SK-N-SH (cell line): ENCODE measurements at regions of chr2 and their contacts with region 1.

Region 1: DNA sequence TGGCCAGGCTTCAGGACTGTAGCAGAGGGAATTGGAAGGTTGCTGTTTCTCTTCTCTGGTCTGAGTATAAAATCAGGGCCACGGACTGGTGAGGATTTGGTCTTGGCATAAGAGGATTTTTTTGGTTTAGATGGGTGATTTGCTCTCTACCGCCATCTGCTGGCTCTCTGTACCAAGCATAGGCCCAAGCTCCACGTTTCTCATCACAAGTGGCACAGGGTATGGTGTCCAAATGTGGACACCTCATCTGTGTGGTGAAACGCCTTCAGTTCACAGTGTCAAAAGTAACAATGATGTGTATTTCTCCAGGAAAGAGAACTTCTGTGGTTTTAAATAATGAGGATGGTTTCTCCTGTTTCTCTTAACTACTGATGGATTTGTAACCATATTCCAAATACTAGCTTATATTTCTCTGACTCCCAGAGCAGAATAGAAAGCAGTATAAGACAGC is 115.1 kb downstream of the EML6 start:
- DNase-seq: peak; percentile 66
- H3K4me3 ChIP-seq: peak overlapping the region in 1 of 2 experiments; percentile 27; a peak in 1 of 4 replicates
- H3K27ac ChIP-seq: no peak overlapping the region
- H3K4me1 ChIP-seq: peaks cover 0 to 4% of the 10 kb centered on the region in 2 experiments; a peak in 2 of 4 replicates
- H3K27me3 ChIP-seq: no peaks in the 10 kb centered on the region
- CTCF ChIP-seq: peak; percentile 95
- EP300 ChIP-seq: no peak
- RAD21 ChIP-seq: peak; percentile 81

Region 2: GRCh38 chr2:54634564-54635511 is 203.8 kb before region 1 on chr2:
- CTCF ChIA-PET with region 1: no interaction called
- POLR2A ChIA-PET with region 1: no interaction called
- DNase-seq: no peak
- H3K4me3 ChIP-seq: peak overlapping the region; percentile 17 to 24; a peak in 2 of 4 replicates
- H3K27ac ChIP-seq: peak overlapping the region; percentile 79 to 82
- H3K4me1 ChIP-seq: peaks cover 28 to 45% of the 10 kb centered on the region in 2 experiments
- H3K27me3 ChIP-seq: no peaks in the 10 kb centered on the region
- CTCF ChIP-seq: no peak
- EP300 ChIP-seq: no peak
- RAD21 ChIP-seq: no peak

Region 3: DNA sequence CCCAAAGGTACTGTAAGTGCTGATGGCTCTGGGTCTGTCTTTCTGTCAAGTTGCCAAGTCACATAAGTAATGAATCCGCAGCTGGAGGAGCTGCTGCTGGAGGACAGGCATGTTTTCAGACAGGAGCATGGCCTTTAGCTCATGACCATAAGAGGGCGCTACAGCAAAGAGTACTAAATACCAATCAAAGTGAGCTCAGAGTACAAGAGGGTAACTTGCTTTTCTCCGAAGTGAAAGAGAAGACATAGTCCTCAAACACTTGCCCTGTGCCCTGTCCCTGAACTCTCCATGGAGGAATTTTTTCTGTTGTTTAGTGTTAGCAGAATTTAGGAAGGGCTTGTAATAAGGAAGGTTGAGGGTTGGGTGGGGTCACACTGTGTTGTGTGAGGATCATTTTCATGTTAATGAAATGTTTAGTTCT is 173.2 kb before region 1 on chr2:
- CTCF ChIA-PET with region 1: interaction called, 22 read pairs
- POLR2A ChIA-PET with region 1: no interaction called
- DNase-seq: peak; percentile 48
- H3K4me3 ChIP-seq: no peak overlapping the region; a peak in 1 of 4 replicates
- H3K27ac ChIP-seq: peak overlapping the region; percentile 34 to 73; a peak in 3 of 4 replicates
- H3K4me1 ChIP-seq: peaks cover 2 to 31% of the 10 kb centered on the region in 2 experiments; a peak in 3 of 4 replicates
- H3K27me3 ChIP-seq: no peaks in the 10 kb centered on the region
- CTCF ChIP-seq: peak; percentile 71
- EP300 ChIP-seq: no peak
- RAD21 ChIP-seq: peak; percentile 53

Region 4: GRCh38 chr2:54773838-54774237 is 64.8 kb before region 1 on chr2:
- CTCF ChIA-PET with region 1: interaction called, 21 read pairs
- POLR2A ChIA-PET with region 1: no interaction called
- DNase-seq: no peak
- H3K4me3 ChIP-seq: no peak overlapping the region
- H3K27ac ChIP-seq: peak overlapping the region in 1 of 2 experiments; percentile 67; a peak in 1 of 4 replicates
- H3K4me1 ChIP-seq: peaks cover 0 to 30% of the 10 kb centered on the region in 2 experiments; a peak in 3 of 4 replicates
- H3K27me3 ChIP-seq: no peaks in the 10 kb centered on the region
- CTCF ChIP-seq: peak; percentile 37
- EP300 ChIP-seq: no peak
- RAD21 ChIP-seq: no peak

Region 5: DNA sequence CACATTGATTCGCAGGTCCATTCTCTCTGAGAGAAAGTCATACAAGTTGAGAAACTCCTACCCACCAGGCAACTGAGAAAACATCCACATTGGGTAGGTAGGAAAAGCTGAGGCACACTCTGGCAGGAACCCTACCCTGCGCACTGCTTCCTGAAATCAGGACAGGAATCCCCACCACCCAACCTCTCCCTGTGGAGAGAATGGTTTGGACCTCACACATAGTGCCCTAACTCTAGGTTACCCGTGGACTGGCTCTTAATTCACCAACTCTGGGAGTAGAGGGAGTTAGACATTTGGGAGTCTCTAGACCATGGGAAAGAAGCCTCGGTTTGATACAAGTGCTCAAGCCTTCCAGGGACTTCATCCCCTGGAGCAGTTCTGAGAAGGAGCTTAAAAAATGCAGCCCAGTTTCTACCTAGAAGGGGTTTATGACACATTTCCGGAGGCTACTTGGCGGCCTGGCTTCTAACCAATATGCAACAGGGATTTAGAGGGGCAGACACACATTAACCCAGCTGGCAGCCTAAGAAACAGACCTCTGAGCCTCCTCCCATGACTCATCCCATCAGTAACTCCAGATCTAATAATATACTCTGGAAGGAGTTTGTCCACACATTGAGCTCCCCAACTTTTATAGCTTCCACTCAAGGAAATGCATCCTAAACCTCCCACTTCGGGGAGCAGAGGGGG is 21.5 kb after region 1 on chr2:
- CTCF ChIA-PET with region 1: interaction called, 15 read pairs
- POLR2A ChIA-PET with region 1: no interaction called
- DNase-seq: no peak
- H3K4me3 ChIP-seq: no peak overlapping the region
- H3K27ac ChIP-seq: peak overlapping the region in 1 of 2 experiments; percentile 80; a peak in 3 of 4 replicates
- H3K4me1 ChIP-seq: peaks cover 0 to 16% of the 10 kb centered on the region in 2 experiments; a peak in 3 of 4 replicates
- H3K27me3 ChIP-seq: no peaks in the 10 kb centered on the region
- CTCF ChIP-seq: no peak
- EP300 ChIP-seq: peak in 1 of 2 experiments; percentile 58; a peak in 2 of 4 replicates
- RAD21 ChIP-seq: no peak

Region 6: DNA sequence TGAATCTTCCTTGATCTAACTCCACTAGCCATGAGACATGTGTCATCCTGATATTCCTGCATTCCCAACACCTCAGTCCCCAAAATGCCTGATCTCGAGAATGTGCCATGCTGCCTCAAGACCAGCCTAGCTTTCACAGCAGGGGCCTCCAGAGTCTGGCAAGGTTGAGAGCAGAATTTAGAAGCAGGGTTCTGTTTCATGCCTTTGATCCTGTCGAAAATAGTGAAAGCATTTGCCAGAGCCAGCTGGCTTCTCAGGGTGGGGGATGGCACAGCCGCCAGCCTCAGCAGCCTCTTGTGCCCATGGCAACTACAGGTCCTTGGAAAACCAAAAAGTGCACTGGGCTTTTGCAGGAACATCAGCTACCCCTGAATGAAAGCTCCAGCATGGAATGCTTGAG is 68.1 kb after region 1 on chr2:
- CTCF ChIA-PET with region 1: no interaction called
- POLR2A ChIA-PET with region 1: no interaction called
- DNase-seq: no peak
- H3K4me3 ChIP-seq: no peak overlapping the region
- H3K27ac ChIP-seq: no peak overlapping the region
- H3K4me1 ChIP-seq: peaks cover 7 to 24% of the 10 kb centered on the region in 2 experiments
- H3K27me3 ChIP-seq: no peaks in the 10 kb centered on the region
- CTCF ChIP-seq: no peak
- EP300 ChIP-seq: no peak
- RAD21 ChIP-seq: no peak

Region 7: GRCh38 chr2:54927085-54927750 is 88.6 kb after region 1 on chr2:
- CTCF ChIA-PET with region 1: no interaction called
- POLR2A ChIA-PET with region 1: no interaction called
- DNase-seq: no peak
- H3K4me3 ChIP-seq: no peak overlapping the region
- H3K27ac ChIP-seq: no peak overlapping the region
- H3K4me1 ChIP-seq: no peaks in the 10 kb centered on the region
- H3K27me3 ChIP-seq: no peaks in the 10 kb centered on the region
- CTCF ChIP-seq: no peak
- EP300 ChIP-seq: no peak
- RAD21 ChIP-seq: no peak

Region 8: GRCh38 chr2:55175254-55176025 is 336.8 kb after region 1 on chr2:
- CTCF ChIA-PET with region 1: interaction called, 10 read pairs
- POLR2A ChIA-PET with region 1: no interaction called
- DNase-seq: peak; percentile 45
- H3K4me3 ChIP-seq: no peak overlapping the region
- H3K27ac ChIP-seq: no peak overlapping the region
- H3K4me1 ChIP-seq: peaks cover 0 to 3% of the 10 kb centered on the region in 2 experiments; a peak in 3 of 4 replicates
- H3K27me3 ChIP-seq: no peaks in the 10 kb centered on the region
- CTCF ChIP-seq: peak; percentile 77
- EP300 ChIP-seq: no peak
- RAD21 ChIP-seq: peak; percentile 84